Astrocyte of the cerebellum (primary cell): ENCODE measurements at regions of chr2 and their contacts with region 1.

Region 1: GRCh38 chr2:168434146-168434545 is 21.9 kb upstream of the CERS6 start:
- DNase-seq: no peak
- H3K4me3 ChIP-seq: no peak overlapping the region
- CTCF ChIP-seq: no peak

Region 2: DNA sequence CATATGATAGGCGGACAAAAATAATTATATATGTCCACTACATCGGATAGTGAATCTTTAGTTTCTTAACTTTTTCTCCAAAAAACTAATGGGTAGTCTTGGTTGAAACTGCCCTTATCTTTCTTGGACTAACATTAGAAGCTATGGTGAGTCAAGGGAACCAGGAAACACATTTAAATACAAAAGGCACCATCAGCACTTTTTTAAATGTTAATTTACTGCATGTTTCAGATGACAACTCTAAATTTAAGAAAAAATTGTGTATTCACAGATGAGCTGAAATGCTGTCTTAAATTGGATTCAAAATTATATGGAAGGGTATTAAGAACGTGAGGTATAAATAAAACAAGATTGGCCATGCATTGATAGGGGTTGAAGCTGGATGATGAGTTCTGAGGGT is 53.6 kb before region 1 on chr2:
- in situ Hi-C with region 1: no loop called
- DNase-seq: no peak
- H3K4me3 ChIP-seq: no peak overlapping the region
- CTCF ChIP-seq: no peak

Region 3: DNA sequence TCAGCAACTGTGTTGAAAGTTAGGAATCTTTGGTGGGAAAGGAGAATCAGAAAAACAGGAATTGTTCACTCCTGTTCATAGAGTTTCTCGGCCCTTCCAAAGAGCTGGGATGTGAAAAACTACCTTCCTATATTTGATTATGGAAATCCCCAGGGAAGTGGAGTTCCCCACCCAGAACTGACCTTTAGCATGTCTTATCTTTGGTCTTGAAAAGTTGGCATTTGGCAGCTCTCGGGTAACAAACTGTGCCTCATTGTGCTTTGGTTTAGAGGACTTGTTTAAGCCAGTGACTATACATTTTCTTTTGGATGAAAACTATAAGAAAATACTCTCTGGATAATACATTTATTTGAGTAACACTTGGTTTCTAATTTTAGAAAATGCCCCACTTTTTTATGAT is 29.4 kb before region 1 on chr2:
- in situ Hi-C with region 1: no loop called
- DNase-seq: no peak
- H3K4me3 ChIP-seq: no peak overlapping the region
- CTCF ChIP-seq: no peak

Region 4: GRCh38 chr2:168500516-168500915 is 66.4 kb after region 1 on chr2:
- in situ Hi-C with region 1: loop called (anchors 5 kb)
- DNase-seq: no peak
- H3K4me3 ChIP-seq: no peak overlapping the region
- CTCF ChIP-seq: no peak